Activated T-helper 1 cell treated with anti-CD3 and anti-CD28 coated beads, Interleukin-12 subunit alpha, Interleukin-12 subunit beta, Interleukin-2, Interleukin-4 antibody, amounts not matched to agents 30 ng/mL and 10 ng/mL and 1 ng/mL, durations not matched to agents 14 hours and 24 hours and 36 hours (primary cell): ENCODE measurements at regions of chr15 and their contacts with region 1.

Region 1: DNA sequence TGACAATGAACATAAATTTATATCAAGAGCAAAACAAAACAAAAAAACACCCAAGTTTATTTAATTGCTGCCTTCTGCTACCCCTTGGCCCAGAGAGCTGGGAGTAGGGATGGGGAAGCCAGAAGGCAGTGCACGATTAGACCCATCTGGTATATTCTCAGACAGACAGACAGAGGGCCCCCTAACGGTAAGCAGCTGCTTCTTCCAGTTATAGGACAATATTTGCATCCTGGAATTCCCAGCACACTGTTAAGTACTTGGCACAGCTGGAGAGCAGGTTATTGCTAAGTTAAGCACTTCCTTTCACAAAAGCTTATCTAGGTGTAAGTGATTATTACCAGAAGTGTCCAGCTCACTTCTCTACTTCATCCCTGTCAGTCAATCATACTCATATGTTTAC is 39.3 kb downstream of the C2CD4B start:
- DNase-seq: no peak
- H3K4me3 Mint-ChIP-seq: no peak overlapping the region
- H3K27ac Mint-ChIP-seq: peak overlapping the region; percentile 9
- H3K4me1 Mint-ChIP-seq: peaks cover 47% of the 10 kb centered on the region
- H3K27me3 Mint-ChIP-seq: peaks cover 14% of the 10 kb centered on the region

Region 2: GRCh38 chr15:62254137-62254934 is 128.6 kb after region 1 on chr15:
- intact Hi-C with region 1: loop called (anchors 10 kb)
- DNase-seq: peak; percentile 38
- H3K4me3 Mint-ChIP-seq: no peak overlapping the region
- H3K27ac Mint-ChIP-seq: no peak overlapping the region
- H3K4me1 Mint-ChIP-seq: no peaks in the 10 kb centered on the region
- H3K27me3 Mint-ChIP-seq: no peaks in the 10 kb centered on the region